Aorta (tissue), 5 donors: ENCODE measurements at regions of chr12 and their contacts with region 1.

Region 1: DNA sequence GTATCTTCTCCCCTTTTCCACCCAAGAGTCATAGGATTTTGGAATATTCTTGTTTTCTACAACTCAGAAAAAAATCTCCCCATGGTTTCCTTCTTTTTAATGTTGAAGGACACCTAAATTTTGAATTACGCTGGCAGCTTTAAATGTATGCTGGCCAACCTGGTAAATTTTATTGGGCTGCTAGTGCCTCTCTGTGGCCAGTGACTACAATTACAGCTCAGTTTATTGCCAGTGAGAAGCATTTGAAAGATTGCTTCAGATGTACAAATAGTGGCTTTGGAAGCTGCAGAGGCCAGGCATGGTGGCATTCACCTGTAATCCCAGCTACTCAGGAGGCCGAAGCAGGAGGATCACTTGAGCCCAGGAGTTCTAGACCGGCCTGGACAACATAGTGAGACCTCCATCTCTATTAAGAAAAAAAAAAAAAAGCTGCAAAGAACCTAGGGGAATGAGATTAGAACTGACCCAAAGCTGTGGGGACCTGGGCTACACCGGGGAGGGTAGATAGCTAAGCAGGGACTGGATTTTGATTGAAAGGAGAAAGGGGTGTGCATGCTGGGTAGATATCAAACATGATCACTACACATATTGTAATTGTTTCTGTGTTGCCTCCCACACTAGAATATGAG is 7.6 kb upstream of the RAB21 start:
- DNase-seq: no peak
- ATAC-seq: peak; percentile 75
- H3K4me3 ChIP-seq: no peak overlapping the region
- H3K27ac ChIP-seq: no peak overlapping the region
- H3K4me1 ChIP-seq: no peaks in the 10 kb centered on the region
- H3K27me3 ChIP-seq: no peaks in the 10 kb centered on the region

Region 2: DNA sequence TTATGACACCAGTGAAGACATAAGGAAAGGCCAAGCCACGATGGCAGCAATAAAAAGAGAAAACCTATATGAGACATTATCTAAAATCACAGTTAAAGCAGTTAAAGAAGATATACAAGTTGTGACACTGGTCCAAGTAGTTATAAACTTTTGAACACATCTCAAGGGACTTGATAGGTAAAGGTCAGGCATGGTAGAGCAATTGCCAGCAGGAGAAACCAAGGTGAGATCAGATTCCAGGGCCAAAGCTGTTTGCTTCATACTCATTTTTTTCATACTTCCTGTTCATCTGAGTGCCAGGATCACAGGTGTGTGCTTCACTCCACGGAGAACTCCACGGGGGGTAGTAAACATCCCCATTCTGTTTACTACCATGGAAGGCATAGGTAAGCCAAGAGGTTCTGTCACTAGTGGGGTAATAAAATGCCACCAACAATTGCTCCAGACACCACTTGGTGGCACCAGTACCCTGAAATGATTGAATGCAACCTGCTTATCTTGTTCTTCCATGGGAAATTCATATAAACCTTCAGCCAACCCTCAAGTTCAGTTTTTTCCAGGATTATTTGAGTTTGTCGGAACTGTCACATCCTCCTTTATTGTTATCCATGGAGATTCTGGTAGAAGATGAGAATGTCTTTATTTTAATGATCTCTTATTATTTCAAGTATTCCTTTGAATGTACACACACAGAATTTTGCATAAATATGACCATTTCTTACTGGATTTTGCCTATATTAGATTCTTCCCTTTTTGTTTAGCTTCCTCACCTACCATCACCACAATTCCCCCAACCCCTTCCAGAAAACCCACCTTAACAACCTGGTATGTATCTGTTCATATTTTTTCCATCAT is 530.1 kb before region 1 on chr12:
- intact Hi-C with region 1: loop called in 1 of 2 experiments (anchors 5 kb)
- DNase-seq: no peak
- ATAC-seq: no peak
- H3K4me3 ChIP-seq: no peak overlapping the region
- H3K27ac ChIP-seq: no peak overlapping the region
- H3K4me1 ChIP-seq: no peaks in the 10 kb centered on the region
- H3K27me3 ChIP-seq: no peaks in the 10 kb centered on the region

Region 3: GRCh38 chr12:71642264-71642663 is 104.8 kb before region 1 on chr12:
- intact Hi-C with region 1: loop called in 1 of 2 experiments (anchors 10 kb)
- DNase-seq: no peak
- ATAC-seq: no peak
- H3K4me3 ChIP-seq: no peak overlapping the region
- H3K27ac ChIP-seq: no peak overlapping the region
- H3K4me1 ChIP-seq: no peaks in the 10 kb centered on the region
- H3K27me3 ChIP-seq: no peaks in the 10 kb centered on the region

Region 4: GRCh38 chr12:71780237-71780822 is 33.2 kb after region 1 on chr12:
- intact Hi-C with region 1: no loop called
- DNase-seq: no peak
- ATAC-seq: no peak
- H3K4me3 ChIP-seq: no peak overlapping the region
- H3K27ac ChIP-seq: no peak overlapping the region
- H3K4me1 ChIP-seq: no peaks in the 10 kb centered on the region
- H3K27me3 ChIP-seq: no peaks in the 10 kb centered on the region

Region 5: DNA sequence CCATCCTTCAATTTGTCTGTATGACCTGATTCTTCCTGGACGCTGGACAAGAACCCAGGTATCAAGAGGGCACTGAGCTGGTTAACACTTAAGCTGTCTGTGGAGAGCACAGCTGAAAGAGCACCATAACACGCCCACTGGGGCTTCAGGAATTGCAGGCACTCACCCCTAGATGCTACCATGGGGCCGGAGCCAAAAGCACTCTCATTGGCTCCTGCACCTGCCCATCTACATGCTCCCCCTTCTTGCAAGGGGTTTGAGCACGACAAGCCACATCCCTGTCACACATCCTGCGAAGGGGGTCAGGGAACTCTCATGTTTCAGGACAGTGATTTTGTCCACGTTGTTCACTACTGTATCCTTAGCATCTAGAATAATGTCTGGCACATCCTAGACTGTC is 57.4 kb after region 1 on chr12:
- intact Hi-C with region 1: no loop called
- DNase-seq: no peak
- ATAC-seq: no peak
- H3K4me3 ChIP-seq: no peak overlapping the region
- H3K27ac ChIP-seq: no peak overlapping the region
- H3K4me1 ChIP-seq: no peaks in the 10 kb centered on the region
- H3K27me3 ChIP-seq: no peaks in the 10 kb centered on the region